ENCODE measurements at regions of chr19 and their contacts with region 1.

Region 1: DNA sequence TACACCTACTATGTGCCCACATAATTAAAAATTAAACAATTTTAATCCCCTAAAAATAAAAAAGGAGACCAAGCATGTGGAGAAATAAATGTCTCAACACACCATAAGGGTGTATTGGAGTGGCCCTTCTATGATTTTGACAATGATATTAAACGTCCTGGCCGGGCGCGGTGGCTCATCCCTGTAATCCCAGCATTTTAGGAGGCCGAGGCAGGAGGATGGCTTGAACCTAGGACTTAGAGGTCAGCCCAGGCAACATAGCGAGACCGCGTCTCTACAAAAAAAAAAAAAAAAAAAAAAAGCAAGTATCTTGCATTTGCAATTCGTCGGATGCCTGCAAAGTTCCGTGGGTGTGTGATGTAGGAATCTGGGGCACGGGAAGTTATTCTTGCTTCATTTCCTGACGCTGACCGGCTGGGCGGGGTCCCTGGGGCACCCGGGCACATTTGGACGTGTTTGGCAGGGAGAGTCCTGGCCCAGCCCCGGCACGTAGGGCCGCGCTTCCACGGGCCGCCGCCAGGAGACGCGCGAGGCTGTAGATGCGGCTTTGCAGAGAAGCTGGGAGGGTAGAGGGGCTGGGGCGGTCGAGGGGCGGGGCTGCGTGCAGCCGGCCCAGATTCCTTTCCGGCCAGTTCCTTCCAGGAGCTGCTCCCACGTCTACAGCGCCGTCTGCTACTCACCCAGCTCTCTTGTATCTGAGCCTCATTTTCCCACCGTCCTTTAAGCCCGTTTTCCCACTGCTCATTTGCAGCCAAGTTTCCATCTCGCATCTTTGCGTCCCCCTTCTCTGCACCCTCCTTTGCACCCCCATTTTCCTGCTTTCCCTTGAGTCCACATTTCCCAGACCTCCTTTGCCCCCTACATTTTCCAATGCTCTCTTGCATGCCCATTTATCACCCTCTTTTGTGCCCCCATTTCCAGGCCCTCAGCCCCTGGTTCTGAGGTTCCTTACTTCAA is 2.2 kb upstream of the TSPAN16 start:
- DNase-seq: peak; percentile 99
- H3K4me3 Mint-ChIP-seq: peak overlapping the region; percentile 48
- H3K27ac Mint-ChIP-seq: no peak overlapping the region
- H3K4me1 Mint-ChIP-seq: peaks cover 11% of the 10 kb centered on the region
- H3K27me3 Mint-ChIP-seq: no peaks in the 10 kb centered on the region
- CTCF ChIP-seq: peak; percentile 99

Region 2: DNA sequence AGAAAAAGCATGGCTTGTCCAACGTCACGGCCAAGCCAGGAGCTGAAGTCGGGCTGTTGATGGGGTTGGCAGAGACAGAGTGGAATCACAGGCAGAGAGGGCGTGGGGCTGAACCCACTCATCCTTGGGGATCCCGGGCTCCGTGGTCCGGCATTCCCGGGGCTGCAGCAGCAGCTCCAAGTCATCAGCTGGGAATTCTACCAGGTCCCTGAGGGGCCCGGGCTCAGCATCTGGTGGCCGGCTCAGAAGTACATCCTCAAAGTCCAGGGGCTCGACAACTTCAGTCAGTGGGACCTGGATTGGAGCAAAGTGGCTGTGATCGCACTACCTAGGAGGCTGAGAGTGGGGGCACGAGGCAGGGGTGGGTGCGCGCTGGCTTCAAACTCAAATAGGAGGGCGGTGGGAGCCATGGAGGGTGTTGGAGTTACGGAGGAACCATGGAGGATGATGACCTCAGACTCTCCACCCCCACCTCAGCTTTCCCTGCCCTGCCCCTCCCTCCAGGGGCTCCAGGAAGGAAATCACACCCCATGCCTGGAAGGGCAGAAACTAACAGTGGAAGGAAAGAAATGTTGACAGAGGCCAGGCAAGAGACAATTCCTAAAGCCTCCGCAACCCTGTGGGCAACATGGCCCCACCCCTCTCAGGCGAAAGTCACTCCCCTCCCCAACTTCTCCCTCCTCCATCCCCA is 40.9 kb before region 1 on chr19:
- CTCF ChIA-PET with region 1: no interaction called
- POLR2A ChIA-PET with region 1: no interaction called
- intact Hi-C with region 1: no loop called
- DNase-seq: no peak
- H3K4me3 Mint-ChIP-seq: no peak overlapping the region
- H3K27ac Mint-ChIP-seq: no peak overlapping the region
- H3K4me1 Mint-ChIP-seq: no peaks in the 10 kb centered on the region
- H3K27me3 Mint-ChIP-seq: no peaks in the 10 kb centered on the region
- CTCF ChIP-seq: no peak

Region 3: DNA sequence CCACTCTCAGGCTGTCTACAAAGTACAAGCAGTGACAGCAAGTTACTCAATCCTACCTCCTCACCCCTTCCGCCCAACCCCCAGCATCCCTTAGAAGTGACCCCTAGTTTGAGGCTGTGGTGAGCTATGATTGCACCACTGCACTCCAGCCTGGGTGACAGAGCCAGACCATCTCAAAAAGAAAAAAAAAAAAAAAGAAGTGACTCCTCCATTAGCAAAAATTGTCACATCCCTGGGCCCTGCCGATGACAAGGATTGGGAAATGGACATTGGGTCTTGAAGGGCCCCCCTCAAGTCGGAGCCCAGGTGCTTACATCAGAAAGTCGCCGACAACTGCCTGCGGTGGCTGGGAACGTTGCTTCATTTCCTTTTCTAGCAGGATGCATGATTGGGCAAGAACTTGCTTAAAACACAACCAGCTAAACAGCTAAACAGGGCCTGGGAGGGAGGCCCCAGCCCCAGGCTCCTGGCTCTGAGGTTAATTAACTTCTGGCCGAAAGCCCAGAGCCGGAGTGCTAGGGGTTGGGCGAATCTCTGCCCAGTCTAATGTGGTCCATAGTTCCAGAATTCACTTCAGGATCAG is 30.5 kb after region 1 on chr19:
- CTCF ChIA-PET with region 1: interaction called, 4 read pairs
- POLR2A ChIA-PET with region 1: interaction called, 11 read pairs
- intact Hi-C with region 1: no loop called
- DNase-seq: peak; percentile 99
- H3K4me3 Mint-ChIP-seq: peak overlapping the region; percentile 53
- H3K27ac Mint-ChIP-seq: peak overlapping the region; percentile 49
- H3K4me1 Mint-ChIP-seq: peaks cover 16% of the 10 kb centered on the region
- H3K27me3 Mint-ChIP-seq: no peaks in the 10 kb centered on the region
- CTCF ChIP-seq: no peak

Region 4: GRCh38 chr19:11346092-11346940 is 52.6 kb after region 1 on chr19 and contains the starts of genes CCDC159 and TMEM205:
- CTCF ChIA-PET with region 1: interaction called, 3 read pairs
- POLR2A ChIA-PET with region 1: interaction called, 11 read pairs
- intact Hi-C with region 1: loop called (anchors 2 kb)
- DNase-seq: peak; percentile 100
- H3K4me3 Mint-ChIP-seq: peak within 1 kb of the TSS; percentile 96
- H3K27ac Mint-ChIP-seq: peak within 1 kb of the TSS; percentile 98
- H3K4me1 Mint-ChIP-seq: peaks cover 30% of the 10 kb centered on the region
- H3K27me3 Mint-ChIP-seq: no peaks in the 10 kb centered on the region
- CTCF ChIP-seq: no peak
- total RNA-seq, gene CCDC159: 17.2 and 18.2 TPM in 2 replicates
- total RNA-seq, gene TMEM205: 93.1 and 96.6 TPM in 2 replicates

Region 5: DNA sequence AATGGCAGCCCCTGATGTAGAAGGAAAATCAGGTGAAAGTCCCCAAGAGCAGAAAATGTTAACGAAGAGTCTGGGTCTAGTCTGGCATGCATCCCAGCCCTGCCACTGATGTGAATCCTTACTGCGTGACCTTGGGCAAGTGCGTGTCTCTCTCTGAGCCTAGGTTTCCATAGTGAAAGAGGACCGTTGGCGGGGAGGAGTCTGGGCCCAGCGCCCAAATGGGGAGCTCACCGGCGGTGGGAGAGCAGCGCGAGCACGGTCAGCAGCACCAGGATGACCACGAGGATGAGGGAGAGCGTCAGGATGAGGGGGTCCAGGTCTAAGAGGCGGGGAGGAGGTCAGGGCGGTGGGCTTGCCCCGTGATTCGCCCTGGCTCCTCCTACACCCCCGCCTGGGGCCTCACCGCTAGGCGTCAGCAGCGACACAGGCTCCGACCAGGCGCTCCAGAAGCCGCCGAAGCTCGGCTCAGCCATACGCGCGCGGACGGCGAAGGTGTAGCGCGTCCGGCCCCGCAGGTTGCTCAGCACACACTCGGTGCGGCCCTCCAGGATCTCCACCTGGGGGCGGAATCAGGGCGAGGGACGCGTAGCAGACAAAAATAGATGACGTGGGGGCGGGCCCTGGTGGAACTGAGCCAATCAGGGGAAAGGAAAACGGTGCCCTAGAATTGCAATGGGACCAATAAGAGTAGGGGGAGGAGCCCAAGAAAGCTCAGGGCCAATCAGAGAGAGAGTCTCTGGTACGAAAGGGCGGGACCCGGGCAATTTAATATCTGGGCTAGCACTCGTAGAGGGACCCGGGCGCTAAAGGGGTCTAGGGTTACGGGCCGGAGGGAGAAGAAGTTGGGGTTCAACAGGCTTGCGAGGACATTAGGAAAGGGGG is 87.2 kb after region 1 on chr19:
- CTCF ChIA-PET with region 1: interaction called, 6 read pairs
- POLR2A ChIA-PET with region 1: interaction called, 7 read pairs
- intact Hi-C with region 1: loop called (anchors 2 kb)
- DNase-seq: peak; percentile 99
- H3K4me3 Mint-ChIP-seq: peak overlapping the region; percentile 76
- H3K27ac Mint-ChIP-seq: peak overlapping the region; percentile 90
- H3K4me1 Mint-ChIP-seq: peaks cover 35% of the 10 kb centered on the region
- H3K27me3 Mint-ChIP-seq: no peaks in the 10 kb centered on the region
- CTCF ChIP-seq: peak; percentile 71

Region 6: DNA sequence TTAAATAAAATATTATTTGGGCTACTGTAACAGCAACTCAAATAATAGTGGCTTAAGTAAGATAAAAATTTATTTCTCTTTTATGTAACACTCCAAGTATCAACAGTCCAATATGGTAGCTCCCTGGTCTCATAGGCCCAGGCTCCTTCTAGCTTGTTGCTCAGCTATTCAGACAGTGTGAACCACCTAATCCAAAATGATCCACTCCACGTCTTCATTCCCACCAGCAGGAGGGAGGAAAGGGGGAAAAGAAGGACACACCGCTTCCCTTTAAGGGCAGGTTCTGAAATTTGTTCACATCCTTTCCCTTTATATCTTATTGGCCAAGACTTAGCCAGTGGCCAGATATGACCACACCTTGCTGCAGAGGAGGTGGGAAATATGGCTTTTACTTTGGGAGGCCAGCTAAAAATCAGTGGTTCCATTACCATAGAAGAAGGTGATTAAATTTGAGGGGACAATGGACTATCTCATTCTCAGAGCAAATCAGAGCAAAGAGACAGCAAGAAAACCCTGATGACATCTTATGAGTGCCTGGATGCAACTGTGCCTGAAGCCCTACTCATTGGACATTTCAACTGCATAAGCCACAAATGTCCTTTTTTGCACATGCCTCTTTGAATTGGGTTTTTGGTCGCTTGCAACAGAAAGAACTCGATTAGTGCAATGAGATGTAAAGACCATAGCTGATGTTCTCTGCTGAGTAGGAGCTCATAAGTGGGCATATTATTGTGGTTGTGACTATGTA is 97.4 kb after region 1 on chr19:
- CTCF ChIA-PET with region 1: no interaction called
- POLR2A ChIA-PET with region 1: no interaction called
- intact Hi-C with region 1: no loop called
- DNase-seq: no peak
- H3K4me3 Mint-ChIP-seq: no peak overlapping the region
- H3K27ac Mint-ChIP-seq: no peak overlapping the region
- H3K4me1 Mint-ChIP-seq: no peaks in the 10 kb centered on the region
- H3K27me3 Mint-ChIP-seq: no peaks in the 10 kb centered on the region
- CTCF ChIP-seq: no peak

Region 7: DNA sequence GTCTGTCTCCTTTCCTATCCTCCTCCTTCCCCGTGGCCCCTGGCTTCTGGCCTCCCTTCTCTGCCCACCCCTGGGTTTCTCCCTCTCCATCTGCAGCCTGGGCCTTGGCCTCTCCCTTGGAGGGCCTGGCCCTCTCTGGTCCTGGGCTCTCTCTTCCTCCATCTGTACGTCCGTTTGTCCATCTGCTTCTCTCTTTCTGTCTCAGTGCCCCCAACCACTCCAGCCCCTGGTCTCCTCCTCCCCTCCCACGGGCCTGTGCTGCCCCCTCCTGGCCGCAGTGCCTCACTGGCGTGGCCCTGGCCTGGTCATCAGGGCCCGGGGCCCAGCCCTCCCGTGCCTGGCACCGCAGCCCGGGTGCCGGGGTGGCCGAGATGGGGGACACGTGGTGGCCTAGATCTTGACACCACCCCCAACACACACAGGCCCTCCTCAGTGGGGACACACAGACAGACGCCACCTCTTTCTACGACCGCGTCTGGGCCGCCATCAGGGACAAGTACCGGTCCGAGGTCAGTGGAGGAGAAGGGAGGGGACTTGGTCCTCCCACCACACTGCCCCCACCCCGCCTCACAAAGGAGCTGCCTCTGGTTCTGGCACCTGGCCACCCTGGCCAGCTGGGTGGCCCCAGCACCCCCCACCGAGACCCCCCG is 153.1 kb after region 1 on chr19:
- CTCF ChIA-PET with region 1: interaction called, 10 read pairs
- POLR2A ChIA-PET with region 1: no interaction called
- intact Hi-C with region 1: loop called (anchors 1 kb)
- DNase-seq: peak; percentile 47
- H3K4me3 Mint-ChIP-seq: no peak overlapping the region
- H3K27ac Mint-ChIP-seq: peak overlapping the region; percentile 8
- H3K4me1 Mint-ChIP-seq: no peaks in the 10 kb centered on the region
- H3K27me3 Mint-ChIP-seq: no peaks in the 10 kb centered on the region
- CTCF ChIP-seq: peak; percentile 80

Region 8: GRCh38 chr19:11482384-11483050 is 188.8 kb after region 1 on chr19:
- CTCF ChIA-PET with region 1: interaction called, 11 read pairs
- POLR2A ChIA-PET with region 1: no interaction called
- intact Hi-C with region 1: loop called (anchors 1 kb)
- DNase-seq: peak; percentile 70
- H3K4me3 Mint-ChIP-seq: peak overlapping the region; percentile 46
- H3K27ac Mint-ChIP-seq: no peak overlapping the region
- H3K4me1 Mint-ChIP-seq: peaks cover 6% of the 10 kb centered on the region
- H3K27me3 Mint-ChIP-seq: no peaks in the 10 kb centered on the region
- CTCF ChIP-seq: peak; percentile 87

Region 9: GRCh38 chr19:11587302-11587974 is 293.7 kb after region 1 on chr19:
- CTCF ChIA-PET with region 1: no interaction called
- POLR2A ChIA-PET with region 1: no interaction called
- intact Hi-C with region 1: loop called (anchors 1 kb)
- DNase-seq: peak; percentile 65
- H3K4me3 Mint-ChIP-seq: no peak overlapping the region
- H3K27ac Mint-ChIP-seq: no peak overlapping the region
- H3K4me1 Mint-ChIP-seq: peaks cover 13% of the 10 kb centered on the region
- H3K27me3 Mint-ChIP-seq: no peaks in the 10 kb centered on the region
- CTCF ChIP-seq: peak; percentile 94